OCI-LY7 (cell line): ENCODE measurements at regions of chr9 and their contacts with region 1.

Region 1: DNA sequence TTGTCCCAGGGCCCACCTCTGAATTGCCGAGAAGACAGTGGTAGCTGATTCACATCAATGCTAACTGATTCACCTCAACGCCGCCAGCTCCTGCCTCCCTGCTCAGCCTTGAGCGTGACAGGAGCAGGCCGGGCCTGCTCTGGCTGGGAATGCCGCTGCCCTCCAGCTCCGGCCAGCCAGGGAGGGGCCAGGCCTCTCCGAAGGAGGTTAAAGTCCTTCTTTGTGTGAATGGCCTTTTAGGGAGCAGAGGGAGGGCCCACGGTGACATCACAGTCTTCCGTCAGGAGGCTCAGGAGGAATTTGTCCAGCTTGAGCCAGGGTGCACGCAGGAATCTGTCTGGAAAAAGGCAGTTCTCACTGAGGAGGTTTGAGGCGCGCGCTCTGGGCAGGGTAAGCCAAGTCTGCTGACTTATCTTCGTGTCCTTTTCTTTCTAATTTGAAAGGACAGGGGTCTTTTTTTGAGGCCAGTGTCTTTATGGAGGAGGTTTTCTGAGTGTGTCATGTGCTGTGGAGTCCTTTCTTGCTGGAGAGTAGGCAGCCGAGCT is 82.7 kb downstream of the C9orf152 start:
- DNase-seq: no peak
- H3K4me3 ChIP-seq: peak overlapping the region; percentile 57
- H3K27ac ChIP-seq: peak overlapping the region; percentile 95
- H3K4me1 ChIP-seq: peaks cover 100% of the 10 kb centered on the region
- CTCF ChIP-seq: no peak

Region 2: DNA sequence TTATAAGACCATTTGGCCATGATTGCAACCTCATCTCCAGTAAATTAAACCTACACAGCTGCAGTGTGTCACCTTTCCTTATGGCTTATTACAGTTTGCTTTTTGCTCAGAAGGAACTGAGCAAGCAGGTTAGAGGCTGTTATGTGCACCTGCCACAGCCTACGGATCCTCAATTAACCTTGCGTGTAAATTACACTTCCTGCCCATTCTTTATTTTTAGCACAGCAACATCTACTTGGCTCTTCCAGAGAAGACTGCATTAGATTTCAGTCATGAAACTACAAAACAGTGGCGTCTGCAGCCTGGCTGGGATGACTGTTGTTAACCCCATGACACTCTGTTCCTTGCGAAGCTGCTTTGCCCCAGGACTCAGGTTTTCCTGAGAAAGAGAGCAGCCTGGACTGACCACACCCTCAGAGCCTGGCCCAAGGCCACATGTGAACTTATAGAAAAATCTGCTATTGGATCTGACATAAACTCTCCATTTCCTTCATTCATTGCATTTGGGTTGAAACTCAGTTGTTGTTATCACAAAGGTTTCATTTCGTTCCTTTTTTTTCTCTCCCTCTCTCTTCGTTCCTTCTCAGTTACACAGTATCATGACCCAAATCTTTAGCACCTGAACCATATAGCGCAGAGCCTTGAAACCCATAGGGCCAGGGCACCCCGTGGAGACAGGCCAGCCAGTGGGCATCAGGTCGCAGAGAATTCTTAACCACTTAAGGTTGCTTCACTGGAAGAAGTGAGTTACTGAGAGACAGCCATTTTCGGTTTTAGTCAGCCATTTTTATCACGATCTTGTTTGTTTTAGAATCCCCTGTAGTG is 206.7 kb before region 1 on chr9:
- CTCF ChIA-PET with region 1: interaction called, 3 read pairs
- POLR2A ChIA-PET with region 1: interaction called, 29 read pairs
- intact Hi-C with region 1: no loop called
- DNase-seq: peak; percentile 96
- H3K4me3 ChIP-seq: peak overlapping the region; percentile 49
- H3K27ac ChIP-seq: peak overlapping the region; percentile 98
- H3K4me1 ChIP-seq: peaks cover 97% of the 10 kb centered on the region
- CTCF ChIP-seq: no peak

Region 3: DNA sequence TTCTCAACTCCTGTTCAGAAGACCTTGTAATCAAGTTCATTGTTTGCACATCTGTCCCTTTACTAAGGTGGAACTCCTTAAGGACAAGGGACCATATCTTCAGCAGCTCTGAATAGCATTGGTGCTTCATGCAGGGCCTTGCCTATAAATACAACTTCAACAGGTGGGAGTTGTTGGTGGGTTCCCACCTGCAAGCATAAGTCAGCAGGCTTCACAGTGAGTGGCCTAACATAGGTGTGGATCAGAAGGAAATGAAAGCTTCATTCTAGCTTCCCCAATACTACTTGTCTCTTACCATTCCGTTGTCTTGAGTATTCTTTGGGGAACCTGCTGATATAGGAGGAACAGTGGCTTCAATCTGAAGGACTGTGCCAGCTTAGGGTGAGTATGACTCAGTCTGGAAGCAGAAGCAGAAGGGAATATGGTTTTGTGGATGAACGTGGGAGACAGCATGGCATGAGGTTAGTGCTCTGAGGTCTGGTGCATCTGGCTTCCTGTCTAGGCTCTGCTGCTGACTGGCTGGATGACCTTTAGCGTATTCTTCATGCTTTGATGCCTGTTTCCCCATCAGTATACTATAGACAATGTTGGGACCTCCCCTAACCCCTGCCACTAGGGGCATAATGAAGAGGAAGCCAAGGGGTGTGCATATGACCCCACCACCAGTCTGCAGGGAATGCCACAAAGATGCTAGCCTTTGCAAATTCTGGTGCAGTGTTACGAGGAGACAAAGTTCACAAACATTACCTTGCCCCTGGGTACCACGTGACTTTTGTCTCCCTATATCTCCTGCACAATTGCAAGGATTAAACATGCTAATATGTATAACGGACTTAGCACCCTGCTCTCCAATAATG is 153.0 kb before region 1 on chr9:
- CTCF ChIA-PET with region 1: no interaction called
- POLR2A ChIA-PET with region 1: interaction called, 23 read pairs
- intact Hi-C with region 1: loop called (anchors 2 kb)
- DNase-seq: peak; percentile 94
- H3K4me3 ChIP-seq: peak overlapping the region; percentile 37
- H3K27ac ChIP-seq: peak overlapping the region; percentile 98
- H3K4me1 ChIP-seq: peaks cover 100% of the 10 kb centered on the region
- CTCF ChIP-seq: peak; percentile 87

Region 4: DNA sequence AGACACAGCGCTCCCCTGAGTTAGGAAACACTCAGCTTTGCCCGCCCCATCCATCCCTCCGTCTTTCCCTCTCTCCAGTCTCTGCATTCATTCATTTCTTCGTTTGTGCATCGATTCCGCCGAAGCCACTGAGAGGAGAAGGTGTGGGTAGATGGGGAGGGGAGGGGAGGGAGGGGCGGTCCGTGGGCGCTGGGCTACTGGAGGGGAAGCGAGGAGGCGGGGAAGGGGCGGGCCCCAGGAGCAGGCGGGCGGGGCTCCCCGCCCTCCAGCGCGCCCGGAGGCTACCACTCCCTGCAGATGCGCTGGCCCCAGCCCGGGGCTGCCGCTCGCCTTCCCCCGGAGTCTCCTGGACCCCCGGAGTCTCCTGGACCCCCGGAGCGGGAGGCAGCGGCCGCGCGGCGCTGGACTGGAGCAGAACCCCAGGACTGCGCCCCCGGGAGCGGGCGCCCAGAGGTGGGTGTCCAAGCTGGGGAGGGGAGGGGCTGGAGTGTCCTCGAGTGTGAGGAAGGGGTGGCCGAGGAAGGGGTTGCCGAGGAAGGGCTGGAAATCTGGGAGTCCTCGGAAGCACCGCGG is 76.8 kb before region 1 on chr9:
- CTCF ChIA-PET with region 1: no interaction called
- POLR2A ChIA-PET with region 1: interaction called, 14 read pairs
- intact Hi-C with region 1: loop called (anchors 1 kb)
- DNase-seq: peak; percentile 88
- H3K4me3 ChIP-seq: peak overlapping the region; percentile 86
- H3K27ac ChIP-seq: peak overlapping the region; percentile 53
- H3K4me1 ChIP-seq: peaks cover 47% of the 10 kb centered on the region
- CTCF ChIP-seq: no peak

Region 5: GRCh38 chr9:110099236-110100095 is 25.8 kb before region 1 on chr9:
- CTCF ChIA-PET with region 1: no interaction called
- POLR2A ChIA-PET with region 1: interaction called, 94 read pairs
- intact Hi-C with region 1: loop called (anchors 2 kb)
- DNase-seq: peak; percentile 47
- H3K4me3 ChIP-seq: peak overlapping the region; percentile 4
- H3K27ac ChIP-seq: peak overlapping the region; percentile 79
- H3K4me1 ChIP-seq: peaks cover 67% of the 10 kb centered on the region
- CTCF ChIP-seq: peak; percentile 47

Region 6: GRCh38 chr9:110110154-110110553 is 15.1 kb before region 1 on chr9:
- CTCF ChIA-PET with region 1: interaction called, 8 read pairs
- POLR2A ChIA-PET with region 1: interaction called, 136 read pairs
- intact Hi-C with region 1: no loop called
- DNase-seq: peak; percentile 72
- H3K4me3 ChIP-seq: peak overlapping the region; percentile 46
- H3K27ac ChIP-seq: peak overlapping the region; percentile 64
- H3K4me1 ChIP-seq: peaks cover 79% of the 10 kb centered on the region
- CTCF ChIP-seq: no peak

Region 7: DNA sequence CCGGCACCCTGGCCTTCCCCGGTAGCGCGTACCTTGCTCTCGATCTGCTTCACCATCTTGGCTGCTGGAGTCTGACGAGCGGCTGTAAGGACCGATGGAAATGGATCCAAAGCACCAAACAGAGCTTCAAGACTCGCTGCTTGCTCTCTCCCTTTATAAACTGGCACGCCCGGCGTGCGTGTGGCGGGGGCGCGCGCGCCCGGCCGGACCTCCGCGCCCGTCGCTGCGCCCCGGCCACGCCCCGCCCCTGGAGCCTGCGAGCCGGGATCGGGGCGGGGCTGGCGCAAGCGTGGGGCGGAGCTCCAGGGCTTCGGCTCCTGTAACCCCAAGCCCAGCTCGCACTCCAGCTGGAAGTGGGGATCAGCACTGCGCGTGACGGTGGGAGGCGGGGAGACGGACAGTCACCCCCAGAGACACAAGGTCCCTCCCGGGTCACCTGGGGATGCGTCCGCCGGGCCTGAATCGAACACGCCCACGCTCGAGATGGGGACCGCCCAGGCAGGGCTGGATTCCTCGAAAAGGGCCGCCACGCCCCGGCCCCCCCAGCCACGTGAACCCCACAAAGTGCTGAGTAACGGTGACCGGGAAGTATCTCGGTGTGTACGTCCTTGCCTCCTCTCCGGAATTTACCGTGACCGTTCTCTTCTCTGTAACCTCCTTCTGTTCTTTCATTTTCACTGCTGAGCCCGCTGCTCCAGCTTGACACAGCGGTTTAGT is 131.3 kb after region 1 on chr9 and contains the start of gene TXN:
- CTCF ChIA-PET with region 1: interaction called, 10 read pairs
- POLR2A ChIA-PET with region 1: no interaction called
- intact Hi-C with region 1: no loop called
- DNase-seq: peak; percentile 89
- H3K4me3 ChIP-seq: peak within 1 kb of the TSS; percentile 92
- H3K27ac ChIP-seq: no peak within 1 kb of the TSS
- H3K4me1 ChIP-seq: peaks cover 26% of the 10 kb centered on the region
- CTCF ChIP-seq: no peak
- total RNA-seq, gene TXN: 82.5 and 120 TPM in 2 replicates